WTC11 (cell line): ENCODE measurements at regions of chr1 and their contacts with region 1.

Region 1: DNA sequence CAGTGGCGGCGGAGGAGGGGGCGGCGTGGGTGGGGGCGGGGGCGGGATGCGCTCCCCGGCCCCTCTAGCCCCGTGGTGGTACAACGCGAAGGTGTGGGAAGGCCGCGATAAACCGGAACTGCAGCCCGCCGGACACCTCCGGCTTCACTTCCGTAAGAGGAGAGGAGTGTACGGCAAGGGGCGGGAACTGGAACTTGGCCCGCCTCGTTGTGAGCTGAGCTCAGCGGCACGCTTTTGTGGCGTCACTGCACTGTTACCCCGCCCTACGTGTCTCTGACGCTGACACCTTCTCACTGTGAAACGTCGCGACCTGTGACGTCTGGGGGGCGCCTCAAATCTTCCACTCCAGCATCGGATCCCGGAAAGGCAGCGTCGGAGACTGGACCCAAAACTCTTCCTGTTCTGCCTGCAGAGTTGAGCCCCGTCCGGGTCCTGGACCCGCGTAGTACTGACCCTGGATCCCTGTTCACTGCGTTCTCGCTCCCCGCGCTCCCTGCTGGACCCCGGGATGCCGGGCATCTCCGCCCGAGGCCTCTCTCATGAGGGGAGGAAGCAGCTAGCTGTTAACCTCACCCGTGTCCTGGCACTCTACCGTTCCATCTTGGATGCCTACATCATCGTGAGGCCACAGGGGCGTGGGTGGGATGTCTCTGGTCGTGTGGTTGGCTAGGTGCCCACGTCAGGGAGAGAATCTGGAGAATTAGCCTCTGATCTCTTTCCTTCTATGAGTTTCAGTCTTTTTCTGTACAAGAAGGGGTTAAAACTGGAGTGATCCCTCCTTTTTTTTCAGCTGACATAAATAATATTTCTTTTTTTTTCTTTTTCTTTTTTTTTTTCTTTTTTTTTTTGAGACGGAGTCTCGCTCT is at the start of gene ISG20L2:
- DNase-seq: peak; percentile 96
- ATAC-seq: peak; percentile 90
- H3K4me3 Mint-ChIP-seq: no peak within 1 kb of the TSS
- H3K27ac Mint-ChIP-seq: peak within 1 kb of the TSS; percentile 99
- H3K4me1 Mint-ChIP-seq: peaks cover 14% of the 10 kb centered on the region
- H3K27me3 Mint-ChIP-seq: no peaks in the 10 kb centered on the region
- CTCF ChIP-seq: no peak
- total RNA-seq, gene ISG20L2: 37.2 to 43.8 TPM (median 42.2 TPM) in 3 replicates

Region 2: DNA sequence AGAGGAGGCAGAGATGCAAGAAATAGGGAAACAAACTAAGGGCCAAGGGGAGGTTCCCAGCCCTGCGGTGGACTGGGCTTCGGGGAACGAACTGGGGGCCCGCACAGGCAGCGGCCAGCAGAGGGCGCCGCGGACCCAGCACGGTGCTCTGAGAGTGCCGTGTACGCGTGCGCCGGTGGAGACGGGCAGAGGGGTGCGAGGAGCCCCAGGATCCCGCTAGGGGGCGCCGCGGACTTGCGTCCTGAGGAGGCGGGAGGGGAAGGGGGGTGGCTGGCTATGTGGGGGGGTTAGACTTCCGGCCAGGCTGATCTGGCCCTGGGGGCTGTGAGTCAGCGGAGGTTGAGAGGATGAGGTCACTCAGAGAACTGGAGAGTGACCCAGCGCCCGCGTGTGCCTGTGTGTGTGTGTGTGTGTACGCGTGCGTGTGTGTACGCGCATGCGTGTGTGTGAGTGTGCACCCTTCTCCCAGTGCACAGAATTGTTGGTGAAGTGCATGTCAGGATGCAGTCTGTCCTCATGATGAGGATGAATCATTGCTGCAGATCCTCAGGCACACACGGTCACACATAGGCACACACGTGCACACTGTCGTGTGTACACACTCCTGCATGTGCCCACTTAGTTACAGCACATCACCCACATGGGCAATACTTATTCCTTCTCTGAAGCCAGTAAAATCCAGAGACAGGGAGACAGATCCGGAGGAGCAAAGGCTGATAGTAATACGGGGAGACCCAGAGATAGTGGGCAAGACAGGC is 68.7 kb before region 1 on chr1:
- CTCF ChIA-PET with region 1: interaction called, 42 read pairs
- POLR2A ChIA-PET with region 1: no interaction called
- DNase-seq: peak; percentile 99
- ATAC-seq: peak; percentile 63
- H3K4me3 Mint-ChIP-seq: peak overlapping the region; percentile 35; the same call in 1 of the 2 replicates
- H3K27ac Mint-ChIP-seq: peak overlapping the region; percentile 99
- H3K4me1 Mint-ChIP-seq: peaks cover 83% of the 10 kb centered on the region
- H3K27me3 Mint-ChIP-seq: peaks cover 47% of the 10 kb centered on the region
- CTCF ChIP-seq: peak; percentile 95

Region 3: DNA sequence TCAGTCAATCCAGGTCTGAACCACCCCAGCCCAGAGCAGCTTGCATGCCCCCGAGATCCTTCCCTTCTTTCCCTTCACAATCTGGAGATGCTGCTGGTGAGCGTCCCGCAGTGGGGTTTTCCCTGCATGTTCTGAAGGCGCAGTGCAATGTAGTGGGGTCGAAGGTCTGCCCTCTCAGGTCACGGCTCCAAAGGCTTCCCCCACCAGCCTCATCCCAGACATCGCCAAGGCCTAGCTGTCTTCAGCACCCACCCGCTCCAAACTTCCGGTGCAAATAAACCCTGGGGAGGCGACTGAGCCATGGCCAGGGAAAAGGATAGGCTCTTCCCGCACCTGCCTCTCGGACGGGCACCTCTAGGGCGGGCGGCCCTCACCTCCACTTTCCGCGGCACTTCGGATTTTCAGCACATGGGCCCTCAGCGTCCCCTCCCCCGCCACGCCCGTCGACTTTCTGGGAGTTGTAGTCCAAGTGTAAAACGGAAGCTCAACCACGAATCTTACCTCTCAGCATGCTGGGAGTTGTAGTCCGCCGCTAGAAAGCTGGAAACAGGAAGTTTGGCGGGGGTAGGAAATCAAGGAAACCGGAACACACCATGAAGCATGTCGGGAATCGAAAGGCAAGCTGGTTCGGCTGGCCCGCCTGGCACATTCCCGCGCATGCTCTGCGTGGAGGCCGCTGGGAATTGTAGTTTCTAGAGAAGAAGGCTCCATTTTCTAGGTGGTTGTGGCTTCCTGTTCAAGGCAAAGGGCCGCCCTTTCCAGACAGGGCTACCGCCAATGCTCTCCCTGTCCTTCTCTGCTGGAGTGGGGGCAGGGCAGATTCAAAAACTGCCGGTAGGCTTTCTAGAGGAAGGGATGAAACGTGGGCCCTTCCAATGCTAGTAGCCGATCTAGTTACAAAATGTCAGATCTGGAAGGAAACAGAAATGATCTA is 12.1 kb after region 1 on chr1 and contains the start of gene MRPL24:
- CTCF ChIA-PET with region 1: interaction called, 42 read pairs
- POLR2A ChIA-PET with region 1: interaction called, 28 read pairs
- DNase-seq: peak; percentile 98
- ATAC-seq: peak; percentile 86
- H3K4me3 Mint-ChIP-seq: peak within 1 kb of the TSS; percentile 90
- H3K27ac Mint-ChIP-seq: peak within 1 kb of the TSS; percentile 100
- H3K4me1 Mint-ChIP-seq: peaks cover 25% of the 10 kb centered on the region
- H3K27me3 Mint-ChIP-seq: no peaks in the 10 kb centered on the region
- CTCF ChIP-seq: no peak
- total RNA-seq, gene MRPL24: 35.1 to 37.4 TPM (median 35.2 TPM) in 3 replicates

Region 4: GRCh38 chr1:156797212-156797871 is 68.5 kb after region 1 on chr1:
- CTCF ChIA-PET with region 1: interaction called, 19 read pairs
- POLR2A ChIA-PET with region 1: no interaction called
- DNase-seq: peak; percentile 70
- ATAC-seq: peak; percentile 88
- H3K4me3 Mint-ChIP-seq: no peak overlapping the region
- H3K27ac Mint-ChIP-seq: no peak overlapping the region
- H3K4me1 Mint-ChIP-seq: no peaks in the 10 kb centered on the region
- H3K27me3 Mint-ChIP-seq: no peaks in the 10 kb centered on the region
- CTCF ChIP-seq: peak; percentile 69

Region 5: DNA sequence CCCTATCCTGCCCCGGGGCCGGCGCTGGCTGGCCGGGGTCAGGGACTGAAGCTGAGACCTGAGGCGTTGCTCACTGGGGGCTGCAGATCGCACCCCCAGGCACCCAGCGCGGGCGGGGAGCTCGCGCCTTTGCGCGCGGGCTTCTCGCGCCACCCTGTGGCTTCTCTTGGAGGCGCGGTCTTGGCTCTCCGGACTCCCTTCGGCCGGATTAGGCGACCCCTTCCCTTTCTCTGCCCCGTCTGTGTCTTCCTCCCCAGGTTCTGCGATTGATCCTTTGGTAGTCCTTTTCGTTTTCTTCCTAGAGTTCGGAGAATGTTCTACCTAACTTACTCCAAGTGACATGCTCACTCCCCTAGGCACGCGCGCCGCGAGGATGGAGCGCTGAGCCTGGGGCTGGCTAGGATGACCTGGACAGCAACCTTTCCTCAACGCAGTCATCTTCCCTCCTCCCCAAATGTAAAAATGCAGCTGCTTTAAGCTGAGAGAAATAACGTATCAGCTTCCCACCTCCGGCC is 131.3 kb after region 1 on chr1:
- CTCF ChIA-PET with region 1: interaction called, 89 read pairs
- POLR2A ChIA-PET with region 1: interaction called, 3 read pairs
- DNase-seq: peak; percentile 76
- ATAC-seq: peak; percentile 63
- H3K4me3 Mint-ChIP-seq: peak overlapping the region; percentile 89
- H3K27ac Mint-ChIP-seq: no peak overlapping the region
- H3K4me1 Mint-ChIP-seq: peaks cover 10% of the 10 kb centered on the region
- H3K27me3 Mint-ChIP-seq: peaks cover 92% of the 10 kb centered on the region
- CTCF ChIP-seq: peak; percentile 53